Activated CD4-positive, alpha-beta T cell treated with anti-CD3 and anti-CD28 coated beads for 36 hours (primary cell): ENCODE measurements at regions of chr17 and their contacts with region 1.

Region 1: GRCh38 chr17:67475236-67475937 is 98.3 kb downstream of the PITPNC1 start:
- DNase-seq: peak; percentile 92
- ATAC-seq: peak; percentile 65
- H3K4me3 Mint-ChIP-seq: peak overlapping the region; percentile 65
- H3K27ac Mint-ChIP-seq: peak overlapping the region; percentile 91
- H3K4me1 Mint-ChIP-seq: peaks cover 66% of the 10 kb centered on the region
- H3K27me3 Mint-ChIP-seq: no peaks in the 10 kb centered on the region

Region 2: DNA sequence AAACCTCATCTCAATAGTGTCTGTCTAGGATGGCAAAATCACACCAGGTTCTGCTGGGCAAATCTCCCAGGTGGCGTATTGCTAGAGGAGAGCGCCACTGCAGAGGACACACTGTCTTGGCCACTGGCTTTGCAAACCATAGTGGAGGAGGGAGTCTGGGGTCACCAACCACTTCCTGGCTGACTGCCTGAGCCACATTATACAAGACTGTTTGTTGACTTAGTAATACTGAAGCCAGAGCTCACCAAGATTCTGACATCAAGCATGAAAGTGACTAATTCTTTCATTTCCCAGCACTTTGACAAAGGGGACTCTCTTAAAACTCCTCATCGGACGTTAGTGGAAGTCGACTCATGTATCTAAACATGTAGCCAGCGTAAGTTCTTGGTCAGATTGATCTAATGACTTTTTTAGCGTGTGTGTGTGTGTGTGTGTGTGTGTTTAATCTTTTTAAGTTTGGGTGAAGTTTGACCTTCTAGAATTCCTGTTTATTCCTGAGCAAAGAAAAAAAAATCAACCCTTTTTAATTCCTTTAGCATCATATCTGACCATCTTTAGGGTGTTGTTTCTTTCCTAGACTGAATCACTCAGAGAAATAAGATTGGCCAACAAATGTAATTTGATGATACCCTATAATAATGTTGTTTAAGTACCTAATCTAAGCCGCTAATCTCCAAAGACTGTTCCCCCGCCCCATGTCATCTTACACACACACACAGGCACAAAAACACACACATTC is 84.6 kb before region 1 on chr17:
- CTCF ChIA-PET with region 1: interaction called, 107 read pairs
- POLR2A ChIA-PET with region 1: interaction called, 5 read pairs
- intact Hi-C with region 1: loop called (anchors 1 kb)
- DNase-seq: peak; percentile 86
- ATAC-seq: peak; percentile 90
- H3K4me3 Mint-ChIP-seq: peak overlapping the region; percentile 66
- H3K27ac Mint-ChIP-seq: peak overlapping the region; percentile 95
- H3K4me1 Mint-ChIP-seq: peaks cover 88% of the 10 kb centered on the region
- H3K27me3 Mint-ChIP-seq: no peaks in the 10 kb centered on the region

Region 3: DNA sequence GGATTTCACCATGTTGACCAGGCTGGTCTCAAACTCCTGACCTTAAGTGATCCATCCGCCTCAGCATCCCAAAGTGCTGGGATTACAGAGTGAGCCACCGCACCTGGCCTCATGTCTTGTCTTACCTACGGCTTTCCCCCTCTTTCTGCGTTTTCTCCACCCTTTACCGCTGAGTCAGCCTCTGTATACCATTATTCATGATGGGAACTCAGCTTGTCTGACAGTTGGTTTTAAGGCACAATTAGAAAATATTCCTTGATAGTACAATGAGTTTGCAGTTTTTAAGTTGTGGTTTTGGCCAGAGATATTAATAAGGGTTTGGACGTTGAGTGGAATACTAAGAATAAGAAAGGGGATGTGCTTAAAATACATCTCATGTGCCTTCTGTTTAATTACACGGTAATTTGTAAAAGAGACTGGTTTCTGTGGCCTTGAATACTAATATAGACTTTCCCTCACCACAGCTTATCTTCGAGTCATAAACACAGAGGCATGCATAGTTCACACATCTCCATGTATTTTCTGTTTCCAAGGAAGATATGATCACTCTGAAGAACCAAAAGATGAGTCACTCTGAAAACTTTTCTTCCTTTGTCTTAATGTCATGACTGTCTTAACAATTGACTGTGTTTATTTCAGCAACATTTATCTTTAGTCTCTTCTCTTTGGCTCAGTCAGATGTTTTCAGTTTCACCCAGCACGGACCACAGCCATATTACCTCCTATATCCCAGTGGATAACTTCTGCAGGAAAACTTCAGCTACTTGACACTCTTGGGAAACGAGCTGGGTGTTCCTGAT is 43.9 kb before region 1 on chr17:
- CTCF ChIA-PET with region 1: interaction called, 55 read pairs
- POLR2A ChIA-PET with region 1: interaction called, 3 read pairs
- intact Hi-C with region 1: loop called (anchors 1 kb)
- DNase-seq: no peak
- ATAC-seq: peak; percentile 76
- H3K4me3 Mint-ChIP-seq: peak overlapping the region; percentile 9
- H3K27ac Mint-ChIP-seq: peak overlapping the region; percentile 89
- H3K4me1 Mint-ChIP-seq: peaks cover 74% of the 10 kb centered on the region
- H3K27me3 Mint-ChIP-seq: no peaks in the 10 kb centered on the region

Region 4: DNA sequence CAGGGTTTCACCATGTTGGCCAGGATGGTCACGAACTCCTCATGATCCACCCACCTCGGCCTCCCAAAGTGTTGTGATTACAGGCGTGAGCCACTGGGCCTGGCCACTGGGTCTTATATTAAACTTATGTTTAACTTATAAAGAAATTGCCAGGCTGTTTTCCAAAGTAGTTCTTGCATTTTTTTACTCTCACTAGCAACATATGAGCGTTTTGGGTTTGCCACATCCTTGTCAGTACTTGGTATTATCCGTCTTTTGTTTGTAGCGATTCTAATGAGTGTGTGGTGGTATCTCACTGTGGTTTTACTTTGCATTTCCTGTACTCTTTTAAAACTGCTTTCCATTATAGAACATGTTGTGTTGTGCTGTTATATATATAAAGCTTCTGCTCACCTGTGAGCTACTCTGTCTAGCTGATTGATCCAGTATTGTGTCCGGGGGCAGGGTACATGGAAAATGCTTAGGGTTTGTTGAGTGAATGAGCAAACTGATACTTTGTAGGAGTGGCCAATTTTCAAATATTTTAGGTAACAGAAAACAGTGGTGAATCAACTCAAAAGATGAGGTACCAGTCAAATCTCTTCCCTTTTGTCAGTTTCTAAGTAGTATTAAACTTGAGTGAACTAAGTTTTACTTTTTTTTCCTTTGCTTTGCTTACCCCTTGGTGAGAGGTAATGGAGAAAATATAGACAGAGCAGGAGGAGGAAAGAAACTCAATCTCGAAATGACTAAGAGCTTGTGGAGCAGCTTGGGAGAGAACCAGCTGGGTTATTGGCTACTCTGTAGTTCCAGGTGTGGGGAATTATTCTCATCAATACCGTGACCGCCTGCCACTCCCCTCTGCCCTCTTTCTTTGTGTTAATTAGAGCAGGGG is 22.5 kb before region 1 on chr17:
- CTCF ChIA-PET with region 1: interaction called, 15 read pairs
- POLR2A ChIA-PET with region 1: interaction called, 4 read pairs
- intact Hi-C with region 1: loop called (anchors 1 kb)
- DNase-seq: peak; percentile 64
- ATAC-seq: peak; percentile 85
- H3K4me3 Mint-ChIP-seq: peak overlapping the region; percentile 50
- H3K27ac Mint-ChIP-seq: peak overlapping the region; percentile 93
- H3K4me1 Mint-ChIP-seq: peaks cover 87% of the 10 kb centered on the region
- H3K27me3 Mint-ChIP-seq: no peaks in the 10 kb centered on the region

Region 5: GRCh38 chr17:67569873-67570272 is 94.5 kb after region 1 on chr17:
- CTCF ChIA-PET with region 1: no interaction called
- POLR2A ChIA-PET with region 1: no interaction called
- intact Hi-C with region 1: no loop called
- DNase-seq: no peak
- ATAC-seq: no peak
- H3K4me3 Mint-ChIP-seq: no peak overlapping the region
- H3K27ac Mint-ChIP-seq: no peak overlapping the region
- H3K4me1 Mint-ChIP-seq: peaks cover 18% of the 10 kb centered on the region
- H3K27me3 Mint-ChIP-seq: no peaks in the 10 kb centered on the region

Region 6: GRCh38 chr17:67602956-67603355 is 127.6 kb after region 1 on chr17:
- CTCF ChIA-PET with region 1: interaction called, 9 read pairs
- POLR2A ChIA-PET with region 1: no interaction called
- intact Hi-C with region 1: loop called in 1 of 2 experiments (anchors 5 kb)
- DNase-seq: peak; percentile 69
- ATAC-seq: peak; percentile 93
- H3K4me3 Mint-ChIP-seq: no peak overlapping the region
- H3K27ac Mint-ChIP-seq: no peak overlapping the region
- H3K4me1 Mint-ChIP-seq: peaks cover 20% of the 10 kb centered on the region
- H3K27me3 Mint-ChIP-seq: no peaks in the 10 kb centered on the region